ENCODE measurements at regions of chr16 and their contacts with region 1.

Region 1: GRCh38 chr16:11255737-11256660 is at the start of gene SOCS1:
- DNase-seq: peak; percentile 63 to 84 (median 76)
- H3K4me3 ChIP-seq: peak within 1 kb of the TSS; percentile 59 to 96 (median 82)
- H3K27ac ChIP-seq: peak within 1 kb of the TSS in 57 of 59 donors; percentile 10 to 97 (median 91)
- H3K27me3 ChIP-seq: no peaks in the 10 kb centered on the region
- CTCF ChIP-seq: peak; percentile 40 to 91 (median 72)
- total RNA-seq, gene SOCS1: 0.28 to 3.7 (median 0.76) TPM in 88 of 120 experiments, not detected in the others

Region 2: GRCh38 chr16:11345040-11345862 is 89.3 kb after region 1 on chr16 and contains the start of gene RMI2:
- intact Hi-C with region 1: loop called (anchors 5 kb)
- DNase-seq: peak; percentile 91 to 97 (median 94)
- H3K4me3 ChIP-seq: peak within 1 kb of the TSS; percentile 30 to 80 (median 65)
- H3K27ac ChIP-seq: peak within 1 kb of the TSS in 2 of 59 donors; percentile 11 to 27
- H3K27me3 ChIP-seq: no peaks in the 10 kb centered on the region
- CTCF ChIP-seq: peak in 15 of 56 donors; percentile 6 to 49 (median 19)
- total RNA-seq, gene RMI2: 0.69 to 7.9 (median 3.0) TPM

Region 3: GRCh38 chr16:11396241-11397048 is 140.4 kb after region 1 on chr16:
- intact Hi-C with region 1: no loop called
- DNase-seq: peak; percentile 66 to 86 (median 78)
- H3K4me3 ChIP-seq: no peak overlapping the region
- H3K27ac ChIP-seq: peak overlapping the region in 2 of 59 donors; percentile 36 to 50
- H3K27me3 ChIP-seq: no peaks in the 10 kb centered on the region
- CTCF ChIP-seq: peak; percentile 92 to 100 (median 99)

Region 4: GRCh38 chr16:11613381-11614303 is 357.6 kb after region 1 on chr16:
- intact Hi-C with region 1: no loop called
- DNase-seq: peak in 3 of 10 donors; percentile 25 to 53 (median 47)
- H3K4me3 ChIP-seq: no peak overlapping the region
- H3K27ac ChIP-seq: peak overlapping the region in 11 of 59 donors; percentile 4 to 63 (median 44)
- H3K27me3 ChIP-seq: no peaks in the 10 kb centered on the region
- CTCF ChIP-seq: no peak

Measured in dorsolateral prefrontal cortex (tissue), 120 donors.